ENCODE measurements at regions of chr21 and their contacts with region 1.

Region 1: GRCh38 chr21:42754270-42754933 is 101.0 kb downstream of the PDE9A start:
- DNase-seq: no peak
- ATAC-seq: peak in 6 of 8 donors; percentile 36 to 58 (median 42)
- H3K4me3 ChIP-seq: no peak overlapping the region
- H3K27ac ChIP-seq: no peak overlapping the region
- H3K4me1 ChIP-seq: no peaks in the 10 kb centered on the region
- H3K27me3 ChIP-seq: no peaks in the 10 kb centered on the region
- CTCF ChIP-seq: no peak

Region 2: DNA sequence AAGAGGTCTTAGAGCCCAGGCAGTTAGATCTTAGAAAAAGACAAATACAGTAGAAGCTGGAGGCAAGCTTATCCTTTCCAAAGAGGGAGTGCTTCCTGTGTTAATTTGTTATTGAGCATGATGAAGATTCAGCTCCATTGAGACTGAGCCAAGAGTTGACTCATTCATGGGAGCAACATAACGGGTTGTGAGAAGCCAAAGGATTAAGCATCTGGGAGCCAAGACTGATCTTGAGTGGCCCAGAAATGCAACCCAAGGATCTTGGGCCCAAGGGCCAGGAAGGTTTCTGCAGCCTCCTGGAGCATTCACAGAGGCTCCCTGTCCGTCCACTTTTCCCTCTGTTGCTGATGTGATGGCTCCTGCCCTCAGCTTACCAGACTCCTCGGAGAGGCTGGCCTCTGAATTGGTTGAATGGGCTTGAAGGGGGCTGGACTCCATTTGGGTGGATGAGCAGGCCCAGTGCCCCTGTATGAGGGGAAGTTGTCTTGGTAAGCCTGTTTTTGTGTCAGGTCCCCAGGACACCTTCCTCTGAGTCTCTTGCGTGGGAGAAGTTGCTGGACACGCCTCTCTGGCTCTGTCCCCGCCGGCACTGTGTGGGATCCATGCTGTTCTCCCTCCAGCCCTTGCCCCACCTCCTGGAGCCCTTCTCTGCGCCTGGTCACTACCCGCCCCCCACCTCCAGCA is 58.6 kb before region 1 on chr21:
- intact Hi-C with region 1: loop called in 1 of 10 experiments (anchors 5 kb)
- DNase-seq: peak in 1 of 2 donors; percentile 42
- ATAC-seq: peak in 7 of 8 donors; percentile 57 to 81 (median 70)
- H3K4me3 ChIP-seq: no peak overlapping the region
- H3K27ac ChIP-seq: no peak overlapping the region
- H3K4me1 ChIP-seq: peaks cover 0 to 18% (median 8%) of the 10 kb centered on the region in 9 donors
- H3K27me3 ChIP-seq: peaks cover 0 to 9% (median 0%) of the 10 kb centered on the region in 7 donors
- CTCF ChIP-seq: no peak

Region 3: GRCh38 chr21:42892931-42893755 is 138.7 kb after region 1 on chr21 and contains the start of gene NDUFV3:
- intact Hi-C with region 1: no loop called
- DNase-seq: peak; percentile 99 to 100
- ATAC-seq: peak; percentile 97 to 100 (median 99)
- H3K4me3 ChIP-seq: peak within 1 kb of the TSS; percentile 58 to 99 (median 86)
- H3K27ac ChIP-seq: peak within 1 kb of the TSS; percentile 86 to 99 (median 96)
- H3K4me1 ChIP-seq: peaks cover 5 to 28% (median 20%) of the 10 kb centered on the region in 9 donors
- H3K27me3 ChIP-seq: no peaks in the 10 kb centered on the region
- CTCF ChIP-seq: no peak
- total RNA-seq, gene NDUFV3: 42.6 to 63.7 (median 52.2) TPM